ENCODE measurements at regions of chr9 and their contacts with region 1.

Region 1: GRCh38 chr9:76297721-76298239 is 96.4 kb downstream of the RFK start:
- DNase-seq: peak in 4 of 5 donors; percentile 25 to 50 (median 34)
- ATAC-seq: peak; percentile 67 to 85 (median 80)
- H3K4me3 ChIP-seq: peak overlapping the region in 7 of 12 donors; percentile 3 to 31 (median 10)
- H3K27ac ChIP-seq: peak overlapping the region in 10 of 12 donors; percentile 24 to 61 (median 47)
- H3K4me1 ChIP-seq: peaks cover 0 to 14% (median 0%) of the 10 kb centered on the region in 12 donors
- H3K27me3 ChIP-seq: no peaks in the 10 kb centered on the region
- CTCF ChIP-seq: no peak
- POLR2A ChIP-seq: no peak

Region 2: GRCh38 chr9:75200892-75201470 is 1096.8 kb before region 1 on chr9:
- intact Hi-C with region 1: loop called in 9 of 10 experiments (anchors 2 to 10 kb)
- DNase-seq: no peak
- ATAC-seq: no peak
- H3K4me3 ChIP-seq: no peak overlapping the region
- H3K27ac ChIP-seq: no peak overlapping the region
- H3K4me1 ChIP-seq: peaks cover 0 to 6% (median 0%) of the 10 kb centered on the region in 12 donors
- H3K27me3 ChIP-seq: no peaks in the 10 kb centered on the region
- CTCF ChIP-seq: peak; percentile 50 to 73 (median 66)
- POLR2A ChIP-seq: no peak

Region 3: DNA sequence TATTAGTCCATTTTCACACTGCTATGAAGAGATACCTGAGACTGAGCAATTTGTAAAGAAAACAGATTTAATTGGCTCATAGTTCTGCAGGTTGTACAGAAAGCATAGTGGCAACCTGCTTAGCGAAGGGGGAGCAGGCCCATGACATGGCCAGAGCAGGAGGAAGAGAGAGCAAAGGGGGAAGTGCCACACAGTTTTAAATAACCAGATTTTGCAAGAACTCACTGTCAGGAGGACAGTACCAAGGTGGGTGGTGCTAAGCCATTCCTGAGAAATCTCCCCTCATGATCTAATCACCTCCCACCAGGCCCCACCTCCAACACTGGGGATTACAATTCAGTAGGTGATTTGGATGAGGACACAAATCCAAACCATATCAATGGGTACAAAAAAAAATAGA is 424.1 kb before region 1 on chr9:
- intact Hi-C with region 1: loop called in 6 of 10 experiments (anchors 5 to 10 kb)
- DNase-seq: no peak
- ATAC-seq: peak in 1 of 4 donors; percentile 48
- H3K4me3 ChIP-seq: no peak overlapping the region
- H3K27ac ChIP-seq: no peak overlapping the region
- H3K4me1 ChIP-seq: peaks cover 0 to 10% (median 0%) of the 10 kb centered on the region in 12 donors
- H3K27me3 ChIP-seq: no peaks in the 10 kb centered on the region
- CTCF ChIP-seq: no peak
- POLR2A ChIP-seq: no peak

Region 4: DNA sequence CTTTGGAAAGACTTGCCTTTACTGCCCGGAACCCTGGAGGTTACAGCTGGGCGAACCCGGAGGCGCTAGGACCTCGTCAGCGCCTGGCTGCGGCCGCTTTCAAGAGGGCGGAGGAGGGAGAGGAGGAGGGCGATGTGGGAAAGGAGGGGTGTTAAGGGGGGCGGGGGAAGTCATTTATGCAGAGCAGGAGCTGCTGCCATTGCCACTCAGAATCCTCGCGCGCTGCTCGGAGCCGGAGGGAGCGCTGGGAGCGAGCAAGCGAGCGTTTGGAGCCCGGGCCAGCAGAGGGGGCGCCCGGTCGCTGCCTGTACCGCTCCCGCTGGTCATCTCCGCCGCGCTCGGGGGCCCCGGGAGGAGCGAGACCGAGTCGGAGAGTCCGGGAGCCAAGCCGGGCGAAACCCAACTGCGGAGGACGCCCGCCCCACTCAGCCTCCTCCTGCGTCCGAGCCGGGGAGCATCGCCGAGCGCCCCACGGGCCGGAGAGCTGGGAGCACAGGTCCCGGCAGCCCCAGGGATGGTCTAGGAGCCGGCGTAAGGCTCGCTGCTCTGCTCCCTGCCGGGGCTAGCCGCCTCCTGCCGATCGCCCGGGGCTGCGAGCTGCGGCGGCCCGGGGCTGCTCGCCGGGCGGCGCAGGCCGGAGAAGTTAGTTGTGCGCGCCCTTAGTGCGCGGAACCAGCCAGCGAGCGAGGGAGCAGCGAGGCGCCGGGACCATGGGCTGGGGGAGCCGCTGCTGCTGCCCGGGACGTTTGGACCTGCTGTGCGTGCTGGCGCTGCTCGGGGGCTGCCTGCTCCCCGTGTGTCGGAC is 407.1 kb before region 1 on chr9 and contains the start of gene PCSK5:
- intact Hi-C with region 1: loop called in 2 of 10 experiments (anchors 10 kb)
- DNase-seq: peak; percentile 93 to 94 (median 93)
- ATAC-seq: peak; percentile 97 to 98 (median 98)
- H3K4me3 ChIP-seq: peak within 1 kb of the TSS; percentile 67 to 96 (median 84)
- H3K27ac ChIP-seq: peak within 1 kb of the TSS; percentile 56 to 89 (median 84)
- H3K4me1 ChIP-seq: peaks cover 0 to 29% (median 11%) of the 10 kb centered on the region in 12 donors
- H3K27me3 ChIP-seq: peaks cover 0 to 10% (median 0%) of the 10 kb centered on the region in 9 donors
- CTCF ChIP-seq: peak in 11 of 12 donors; percentile 12 to 62 (median 34)
- POLR2A ChIP-seq: peak in 1 of 2 donors; percentile 90
- total RNA-seq, gene PCSK5: 3.9 to 13.6 (median 6.0) TPM

Region 5: DNA sequence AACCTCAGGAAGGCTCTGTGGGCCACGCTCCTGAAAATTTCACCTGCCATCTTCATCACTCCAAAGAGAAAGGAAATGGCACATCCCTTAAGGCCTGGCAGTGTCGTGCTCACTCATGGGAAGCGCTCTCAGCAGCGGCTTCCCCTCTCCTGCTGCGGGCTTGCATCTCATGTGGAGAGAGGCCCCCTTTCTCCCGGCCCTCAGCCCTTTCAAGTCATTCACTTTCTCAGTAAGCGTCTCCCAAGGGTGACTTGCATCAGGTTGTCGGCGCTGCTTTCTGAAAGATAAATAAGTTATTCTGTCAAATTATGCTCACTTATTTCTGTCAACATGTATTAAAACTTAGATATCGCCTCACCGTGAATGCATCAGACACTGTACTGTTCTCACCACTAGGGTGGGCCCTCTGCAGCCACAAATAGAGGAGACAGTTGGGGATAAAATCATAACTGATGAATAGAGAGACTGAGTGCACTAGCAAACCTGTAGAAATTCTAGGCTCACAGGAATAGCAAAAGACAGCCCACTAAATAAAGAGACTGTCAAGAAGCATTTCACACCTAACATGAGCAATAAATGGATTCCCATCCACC is 78.1 kb before region 1 on chr9:
- intact Hi-C with region 1: loop called in 3 of 10 experiments (anchors 5 kb)
- DNase-seq: no peak
- ATAC-seq: peak in 3 of 4 donors; percentile 54 to 70 (median 67)
- H3K4me3 ChIP-seq: peak overlapping the region in 1 of 12 donors; percentile 7
- H3K27ac ChIP-seq: no peak overlapping the region
- H3K4me1 ChIP-seq: peaks cover 0 to 7% (median 0%) of the 10 kb centered on the region in 12 donors
- H3K27me3 ChIP-seq: peaks cover 0 to 13% (median 0%) of the 10 kb centered on the region in 9 donors
- CTCF ChIP-seq: peak in 10 of 12 donors; percentile 16 to 54 (median 39)
- POLR2A ChIP-seq: no peak

Measured in heart left ventricle (tissue), 16 donors.